ENCODE measurements at regions of chr11 and their contacts with region 1.

Region 1: GRCh38 chr11:93432247-93432646 is 101.7 kb downstream of the DEUP1 start:
- DNase-seq: no peak
- ATAC-seq: no peak
- H3K4me3 ChIP-seq: no peak overlapping the region
- H3K27ac ChIP-seq: no peak overlapping the region
- H3K4me1 ChIP-seq: no peaks in the 10 kb centered on the region
- H3K27me3 ChIP-seq: no peaks in the 10 kb centered on the region
- CTCF ChIP-seq: no peak
- POLR2A ChIP-seq: no peak
- RAD21 ChIP-seq: no peak

Region 2: GRCh38 chr11:93410441-93410840 is 21.8 kb before region 1 on chr11:
- CTCF ChIA-PET with region 1: no interaction called
- POLR2A ChIA-PET with region 1: no interaction called
- RAD21 ChIA-PET with region 1: no interaction called
- intact Hi-C with region 1: loop called (anchors 2 kb)
- DNase-seq: no peak
- ATAC-seq: no peak
- H3K4me3 ChIP-seq: no peak overlapping the region
- H3K27ac ChIP-seq: no peak overlapping the region
- H3K4me1 ChIP-seq: no peaks in the 10 kb centered on the region
- H3K27me3 ChIP-seq: no peaks in the 10 kb centered on the region
- CTCF ChIP-seq: no peak
- POLR2A ChIP-seq: no peak
- RAD21 ChIP-seq: no peak

Region 3: GRCh38 chr11:93727985-93728791 is 295.9 kb after region 1 on chr11:
- CTCF ChIA-PET with region 1: no interaction called
- POLR2A ChIA-PET with region 1: no interaction called
- RAD21 ChIA-PET with region 1: no interaction called
- intact Hi-C with region 1: no loop called
- DNase-seq: no peak
- ATAC-seq: peak; percentile 24; the same call in 1 of the 2 replicates
- H3K4me3 ChIP-seq: no peak overlapping the region
- H3K27ac ChIP-seq: 0 out of 2 replicates have a peak overlapping the region, but pooled peaks have one; percentile 11
- H3K4me1 ChIP-seq: no peaks in the 10 kb centered on the region
- H3K27me3 ChIP-seq: no peaks in the 10 kb centered on the region
- CTCF ChIP-seq: no peak
- POLR2A ChIP-seq: no peak
- RAD21 ChIP-seq: no peak